GM10248 (cell line): ENCODE measurements at regions of chr1 and their contacts with region 1.

Region 1: DNA sequence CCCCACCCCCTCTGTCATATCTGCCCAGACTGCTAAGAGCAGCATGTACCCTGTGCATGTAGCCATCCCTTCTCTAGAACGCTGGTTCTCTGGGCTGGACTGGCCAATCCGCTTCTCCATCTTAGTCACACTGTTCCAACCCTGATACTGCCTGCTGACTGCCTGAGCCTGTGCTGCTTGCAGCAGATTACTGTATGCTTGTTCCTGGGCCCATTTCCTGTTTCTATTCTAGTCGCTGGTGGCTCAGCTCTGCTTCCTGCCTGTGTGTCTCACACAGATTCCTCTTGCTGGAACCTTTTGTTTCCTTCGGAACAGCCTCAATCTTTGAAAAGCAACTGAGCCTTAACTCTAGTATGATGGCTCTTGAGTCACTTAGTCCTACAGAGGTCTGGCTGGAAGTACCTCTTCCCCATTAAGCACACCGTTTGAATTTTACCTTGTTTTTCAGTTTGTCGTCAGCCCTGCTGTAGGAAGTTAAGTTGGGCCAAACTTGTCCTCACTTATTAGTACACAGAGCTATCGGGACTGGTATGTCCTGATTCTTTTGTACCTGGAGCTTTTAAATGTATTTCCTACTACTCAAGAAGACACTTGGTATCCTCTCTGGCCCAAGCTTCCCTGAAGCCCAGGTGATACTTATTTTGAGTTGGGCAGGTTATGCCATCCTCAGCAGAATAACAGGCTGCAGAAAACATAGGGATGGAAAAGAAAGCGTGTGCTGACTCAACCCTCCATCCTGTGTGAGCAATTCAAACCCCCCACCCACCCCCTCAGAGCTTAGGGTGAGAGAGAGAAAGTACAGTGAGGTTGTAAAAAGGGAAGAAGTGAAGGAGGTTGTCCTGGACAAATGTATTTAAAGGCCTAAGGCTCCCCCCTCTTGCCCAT is 43.4 kb upstream of the PIGV start:
- DNase-seq: peak; percentile 84
- CTCF ChIP-seq: peak; percentile 28

Region 2: DNA sequence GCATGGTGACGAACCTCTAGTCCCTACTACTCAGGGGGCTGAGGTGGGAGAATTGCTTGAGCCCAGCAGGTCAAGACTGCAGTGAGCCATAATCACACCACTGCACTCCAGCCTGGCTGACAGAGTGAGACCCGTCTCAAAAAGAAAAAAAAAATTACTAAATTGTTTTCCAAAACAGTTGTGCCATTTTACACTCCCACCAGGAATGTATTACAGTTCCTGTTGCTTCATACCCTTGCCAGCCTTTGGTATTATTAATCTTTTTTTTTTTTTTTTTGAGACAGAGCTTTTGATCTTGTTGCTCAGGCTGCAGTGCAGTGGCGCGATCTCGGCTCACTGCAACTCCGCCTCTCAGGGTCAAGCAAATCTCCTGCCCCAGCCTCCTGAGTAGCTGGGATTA is 158.8 kb before region 1 on chr1:
- CTCF ChIA-PET with region 1: no interaction called
- POLR2A ChIA-PET with region 1: no interaction called
- DNase-seq: no peak
- CTCF ChIP-seq: no peak

Region 3: DNA sequence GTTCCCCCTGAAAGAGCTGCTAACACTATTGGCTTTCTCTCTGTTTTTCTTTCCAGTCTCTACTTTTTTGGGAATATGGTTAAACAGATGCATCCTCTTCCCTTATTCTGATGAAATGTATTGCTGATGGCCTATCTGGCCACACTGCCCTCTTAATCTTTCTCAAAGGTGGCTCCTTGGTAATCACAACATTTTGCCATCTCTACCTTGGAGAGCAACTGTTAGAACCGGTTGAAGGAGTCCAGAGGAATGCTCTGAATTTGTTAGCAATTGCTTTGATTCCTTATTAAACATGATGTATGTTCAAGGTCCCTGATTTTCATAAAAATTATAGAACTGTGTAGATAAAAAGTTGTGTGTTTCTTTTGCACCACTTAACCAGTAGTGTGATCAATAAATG is 98.6 kb before region 1 on chr1:
- CTCF ChIA-PET with region 1: no interaction called
- POLR2A ChIA-PET with region 1: no interaction called
- DNase-seq: no peak
- CTCF ChIP-seq: no peak

Region 4: DNA sequence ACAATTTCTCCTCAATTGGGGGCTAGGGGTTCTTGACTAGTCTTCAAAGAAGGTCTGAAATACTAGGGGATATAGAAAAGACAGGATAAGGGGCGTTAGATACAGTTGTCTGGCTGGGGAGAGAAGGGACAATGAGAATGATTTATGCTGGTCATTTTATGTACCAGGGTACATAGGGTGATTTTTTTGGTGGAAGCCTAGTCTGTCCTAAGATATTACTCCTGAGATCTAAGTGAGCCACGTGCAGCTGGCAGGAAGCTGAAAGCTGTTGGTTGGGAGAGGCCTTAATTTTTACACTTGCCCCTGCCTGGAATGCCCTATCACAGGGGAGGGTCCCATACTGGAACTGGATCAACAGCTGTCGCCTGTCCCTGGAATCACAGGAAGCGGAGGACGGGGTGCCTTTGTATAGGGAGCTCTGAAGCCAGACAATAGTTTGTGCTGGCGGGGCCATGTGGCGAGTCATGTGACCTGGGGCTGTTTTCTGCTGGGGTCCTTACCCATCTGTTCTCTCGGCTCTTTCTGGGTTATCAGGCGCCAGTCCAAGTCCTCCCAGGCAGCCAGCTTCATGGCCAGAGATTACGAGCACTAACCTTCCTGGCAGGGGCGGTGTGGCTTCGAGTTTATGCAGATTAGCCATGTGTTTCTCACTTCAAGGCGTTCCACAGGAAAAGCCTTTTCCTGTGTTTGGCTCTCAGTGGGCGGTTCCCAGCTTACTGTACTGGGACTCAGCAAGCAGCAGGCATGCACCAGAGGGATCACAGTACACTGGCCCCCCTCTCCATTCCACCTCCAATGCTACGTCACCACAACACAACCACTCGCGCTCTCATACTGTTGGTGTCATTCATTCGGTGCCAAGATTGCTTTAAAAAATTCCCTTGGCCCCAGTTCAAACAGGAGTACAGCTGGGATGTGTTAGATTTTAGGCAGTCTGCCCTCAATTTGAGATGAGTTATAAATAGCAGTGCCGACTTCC is 21.0 kb before region 1 on chr1:
- CTCF ChIA-PET with region 1: interaction called, 61 read pairs
- POLR2A ChIA-PET with region 1: no interaction called
- DNase-seq: peak; percentile 28
- CTCF ChIP-seq: no peak

Region 5: DNA sequence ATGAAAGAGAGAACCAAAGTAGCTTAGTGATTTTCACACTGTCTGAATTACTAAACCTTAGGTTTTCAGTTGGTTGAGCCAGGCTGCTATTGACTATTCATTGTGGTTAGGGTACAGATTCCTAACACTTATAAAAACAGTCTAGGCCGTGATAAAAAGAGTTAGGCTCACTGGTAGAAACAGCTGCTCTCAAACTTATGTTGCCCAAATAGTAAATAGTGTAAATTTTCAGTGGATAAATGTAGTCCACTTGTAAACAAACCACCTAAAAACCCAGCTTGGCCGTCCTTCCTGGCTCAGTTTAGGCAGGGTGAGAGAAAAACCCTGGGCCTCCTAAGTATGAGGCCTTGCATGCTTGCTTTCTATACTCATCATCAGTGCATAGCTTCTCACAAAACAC is 13.6 kb before region 1 on chr1:
- CTCF ChIA-PET with region 1: interaction called, 61 read pairs
- POLR2A ChIA-PET with region 1: no interaction called
- DNase-seq: no peak
- CTCF ChIP-seq: no peak

Region 6: GRCh38 chr1:26758370-26758769 is 14.1 kb after region 1 on chr1:
- CTCF ChIA-PET with region 1: interaction called, 18 read pairs
- POLR2A ChIA-PET with region 1: no interaction called
- DNase-seq: no peak
- CTCF ChIP-seq: no peak

Region 7: DNA sequence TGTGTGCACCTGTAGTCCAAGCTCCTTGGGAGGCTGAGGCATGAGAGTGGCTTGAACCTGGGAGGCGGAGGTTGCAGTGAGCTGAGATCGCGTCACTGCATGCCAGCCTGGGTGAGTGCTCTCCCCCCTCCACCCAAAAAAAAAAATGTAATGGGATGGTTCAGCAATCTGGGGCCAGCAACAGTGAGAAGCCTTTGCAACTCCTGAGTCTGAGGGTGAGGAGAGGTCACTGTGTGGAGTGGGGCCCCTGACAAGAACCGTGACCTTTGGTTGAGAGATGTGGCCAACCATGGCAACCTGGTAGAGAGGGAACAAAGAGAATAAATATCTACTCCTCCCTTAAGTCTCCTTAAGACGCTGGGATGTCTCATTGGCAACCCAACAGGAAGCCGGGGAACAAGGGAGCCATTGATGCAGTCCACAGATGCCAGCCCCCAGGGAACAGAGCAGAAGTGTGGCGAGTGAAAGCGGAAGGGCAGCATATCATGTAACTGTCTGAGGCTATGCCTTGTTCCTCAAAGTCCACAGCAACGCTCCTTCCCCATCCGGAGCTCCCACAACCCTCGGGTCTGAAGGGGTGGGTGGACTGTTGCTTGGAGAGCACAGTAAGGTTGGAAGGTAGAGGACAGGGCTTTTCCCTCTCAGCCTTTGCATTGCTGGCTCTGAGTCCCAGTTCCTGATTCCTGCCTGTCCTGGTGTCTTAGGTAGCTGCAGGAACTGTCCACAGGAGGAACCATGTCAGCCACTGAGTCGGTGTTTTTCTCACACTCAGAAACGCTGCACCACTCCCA is 257.4 kb after region 1 on chr1:
- CTCF ChIA-PET with region 1: no interaction called
- POLR2A ChIA-PET with region 1: no interaction called
- DNase-seq: no peak
- CTCF ChIP-seq: no peak